Sciatic nerve (tissue), 2 donors: ENCODE measurements at regions of chr17 and their contacts with region 1.

Region 1: DNA sequence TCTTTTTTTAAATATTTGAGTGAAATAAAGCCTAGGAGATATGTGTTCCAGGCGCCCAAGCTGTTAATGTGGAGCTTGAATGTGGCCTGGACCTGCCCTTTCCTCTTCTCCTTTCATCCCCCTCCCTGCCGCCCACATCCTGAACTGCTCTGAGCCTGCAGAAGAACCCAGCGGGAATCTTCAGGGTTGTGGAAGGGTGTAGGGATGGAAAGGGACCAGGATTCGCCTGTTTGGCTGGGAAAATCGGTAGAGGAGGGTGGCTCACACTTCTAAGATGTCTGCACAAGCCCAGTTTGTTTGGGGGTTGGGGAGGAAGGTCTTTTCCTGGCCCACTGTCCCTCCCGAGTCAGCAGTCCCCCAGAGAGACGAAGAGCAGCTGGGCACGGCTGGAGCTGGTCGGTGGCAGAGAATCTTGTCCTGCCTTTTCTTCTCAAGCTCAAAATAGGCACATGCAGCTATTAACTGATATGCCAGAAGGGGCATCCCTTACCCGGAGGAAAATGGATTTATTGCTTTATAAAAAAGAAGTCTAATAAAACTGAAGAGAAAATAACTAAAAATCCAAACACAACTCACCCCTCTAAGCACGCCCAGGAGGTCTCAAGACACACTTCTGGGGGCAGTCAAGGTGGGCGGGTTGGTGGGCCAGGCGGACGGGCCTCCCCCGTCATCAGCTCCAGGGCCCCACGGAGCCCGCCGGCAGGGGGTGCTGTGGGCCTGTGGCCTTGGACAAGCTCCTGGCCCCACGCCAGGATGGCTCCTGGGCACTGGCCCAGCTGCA is 11.5 kb upstream of the PITPNA start:
- DNase-seq: peak; percentile 94
- ATAC-seq: peak; percentile 61

Region 2: DNA sequence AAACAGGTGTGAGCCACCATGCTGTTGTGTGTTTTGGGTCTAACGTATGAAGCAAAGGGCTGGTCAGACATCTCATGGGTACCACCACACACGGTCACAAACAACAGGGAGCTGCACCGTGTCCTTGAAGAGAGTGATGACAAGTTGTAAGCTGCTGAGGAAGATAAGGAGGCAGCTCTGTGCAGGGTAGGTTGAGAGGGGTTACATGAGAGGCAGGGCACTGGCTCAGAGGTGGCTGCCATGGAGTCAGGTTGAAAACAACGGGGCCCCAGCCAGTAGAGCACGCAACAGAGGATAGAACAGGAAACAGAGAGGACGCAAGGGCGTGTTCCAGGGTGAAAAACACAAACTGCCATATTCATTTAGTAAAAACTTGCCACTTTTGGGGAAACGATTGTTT is 242.4 kb before region 1 on chr17:
- intact Hi-C with region 1: no loop called
- DNase-seq: peak; percentile 42
- ATAC-seq: peak; percentile 31

Region 3: GRCh38 chr17:1628856-1629646 is 54.9 kb after region 1 on chr17:
- intact Hi-C with region 1: loop called (anchors 5 kb)
- DNase-seq: peak; percentile 97
- ATAC-seq: peak; percentile 88

Region 4: DNA sequence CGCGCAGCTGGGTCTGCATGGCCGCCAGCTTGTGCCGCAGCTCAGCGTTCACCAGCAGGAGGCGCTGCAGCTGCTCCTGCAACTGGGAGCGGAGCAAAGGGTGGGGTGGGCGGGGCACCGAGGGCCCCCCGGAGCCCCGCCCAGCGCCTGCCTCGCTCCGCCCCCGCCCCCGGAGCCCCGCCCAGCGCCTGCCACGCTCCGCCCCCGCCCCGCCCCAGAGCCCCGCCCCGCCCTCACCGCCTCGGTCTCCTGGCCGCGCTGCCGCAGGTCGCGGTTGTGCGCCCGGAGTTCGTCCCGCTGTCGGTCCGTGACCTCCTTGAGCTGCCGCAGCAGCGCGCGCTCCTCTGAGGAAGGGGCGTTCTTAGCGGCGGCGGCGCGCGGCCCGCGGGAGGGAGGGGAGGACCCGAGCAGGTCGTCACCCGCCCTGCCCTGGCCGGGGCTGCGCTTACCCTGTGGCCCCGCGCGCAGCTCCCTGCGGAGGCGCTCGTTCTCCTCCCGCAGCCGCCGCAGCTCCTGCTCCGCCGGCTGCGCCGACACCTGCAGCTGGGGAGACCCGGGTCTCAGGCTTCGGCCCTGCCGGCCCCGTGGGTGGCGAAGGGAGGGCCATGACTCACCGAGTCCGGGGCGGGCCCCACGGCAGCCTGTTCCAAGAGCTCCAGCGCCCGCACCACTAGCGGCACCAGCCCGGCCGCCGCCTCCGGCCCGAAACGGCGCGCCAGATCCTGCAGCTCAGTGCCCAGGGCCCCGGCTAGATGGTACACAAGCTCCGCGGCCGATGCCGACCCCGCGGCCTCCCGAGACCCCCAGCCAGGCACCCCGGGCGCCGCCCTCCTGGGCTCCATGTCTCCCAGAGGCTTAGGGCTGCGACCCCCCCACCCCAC is 75.1 kb after region 1 on chr17:
- intact Hi-C with region 1: loop called (anchors 5 kb)
- DNase-seq: peak; percentile 97
- ATAC-seq: peak; percentile 66

Region 5: DNA sequence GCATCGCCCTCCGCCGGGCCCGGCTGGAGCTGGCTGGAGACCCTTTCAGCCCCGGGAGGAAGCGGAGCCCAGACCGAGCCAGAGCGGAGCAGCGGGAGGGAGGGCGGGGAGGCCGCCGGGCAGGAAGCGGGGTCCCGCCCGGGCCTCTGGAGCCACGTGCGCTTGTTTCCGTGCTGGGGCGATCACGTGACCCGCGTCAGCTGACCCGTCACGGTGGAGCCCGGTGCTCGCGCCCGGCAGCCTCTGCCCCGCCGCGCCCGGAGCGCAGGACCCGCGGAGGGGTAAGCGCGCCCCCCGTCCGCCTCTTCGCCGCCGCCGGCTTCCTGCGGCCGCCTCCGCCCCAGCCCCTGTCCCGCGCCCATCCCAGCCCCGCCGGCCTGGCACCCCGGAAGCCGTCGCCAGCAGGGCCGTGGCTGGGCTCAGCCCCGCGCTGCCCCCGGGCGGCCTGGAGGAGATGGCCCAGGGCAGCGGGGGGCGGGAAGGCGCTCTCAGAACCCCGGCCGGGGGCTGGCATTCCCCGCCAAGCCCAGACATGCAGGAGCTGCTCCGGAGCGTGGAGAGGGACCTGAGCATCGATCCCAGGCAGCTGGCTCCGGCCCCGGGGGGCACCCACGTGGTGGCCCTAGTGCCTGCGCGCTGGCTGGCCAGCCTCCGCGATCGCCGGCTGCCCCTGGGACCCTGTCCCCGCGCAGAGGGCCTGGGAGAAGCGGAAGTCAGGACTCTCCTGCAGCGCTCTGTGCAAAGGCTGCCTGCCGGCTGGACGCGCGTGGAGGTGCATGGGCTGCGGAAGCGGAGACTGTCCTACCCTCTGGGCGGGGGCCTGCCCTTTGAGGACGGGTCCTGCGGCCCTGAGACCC is 150.6 kb after region 1 on chr17 and contains the start of gene WDR81:
- intact Hi-C with region 1: loop called (anchors 10 kb)
- DNase-seq: peak; percentile 97
- ATAC-seq: peak; percentile 85
- total RNA-seq, gene WDR81: 26.1 TPM